Pancreas (tissue), 10 donors: ENCODE measurements at regions of chr7 and their contacts with region 1.

Region 1: GRCh38 chr7:120987683-120988590 is 574 bp upstream of the CPED1 start:
- DNase-seq: peak; percentile 70 to 89 (median 84)
- ATAC-seq: peak; percentile 92 to 96 (median 94)
- H3K4me3 ChIP-seq: peak overlapping the region; percentile 8 to 43 (median 22)
- H3K27ac ChIP-seq: peak overlapping the region in 2 of 4 donors; percentile 25 to 60
- H3K4me1 ChIP-seq: peaks cover 0 to 3% (median 0%) of the 10 kb centered on the region in 3 donors
- H3K27me3 ChIP-seq: peaks cover 0 to 21% (median 5%) of the 10 kb centered on the region in 4 donors
- CTCF ChIP-seq: peak; percentile 73 to 95 (median 93)

Region 2: GRCh38 chr7:120950539-120951308 is 37.2 kb before region 1 on chr7 and contains the start of gene ING3:
- intact Hi-C with region 1: no loop called
- DNase-seq: peak; percentile 96 to 98 (median 97)
- ATAC-seq: peak; percentile 94 to 98 (median 97)
- H3K4me3 ChIP-seq: peak within 1 kb of the TSS; percentile 33 to 62 (median 52)
- H3K27ac ChIP-seq: peak within 1 kb of the TSS; percentile 91 to 95 (median 94)
- H3K4me1 ChIP-seq: peaks cover 8 to 18% (median 18%) of the 10 kb centered on the region in 3 donors
- H3K27me3 ChIP-seq: no peaks in the 10 kb centered on the region
- CTCF ChIP-seq: no peak
- total RNA-seq, gene ING3: 6.2 to 10.1 (median 7.6) TPM

Region 3: DNA sequence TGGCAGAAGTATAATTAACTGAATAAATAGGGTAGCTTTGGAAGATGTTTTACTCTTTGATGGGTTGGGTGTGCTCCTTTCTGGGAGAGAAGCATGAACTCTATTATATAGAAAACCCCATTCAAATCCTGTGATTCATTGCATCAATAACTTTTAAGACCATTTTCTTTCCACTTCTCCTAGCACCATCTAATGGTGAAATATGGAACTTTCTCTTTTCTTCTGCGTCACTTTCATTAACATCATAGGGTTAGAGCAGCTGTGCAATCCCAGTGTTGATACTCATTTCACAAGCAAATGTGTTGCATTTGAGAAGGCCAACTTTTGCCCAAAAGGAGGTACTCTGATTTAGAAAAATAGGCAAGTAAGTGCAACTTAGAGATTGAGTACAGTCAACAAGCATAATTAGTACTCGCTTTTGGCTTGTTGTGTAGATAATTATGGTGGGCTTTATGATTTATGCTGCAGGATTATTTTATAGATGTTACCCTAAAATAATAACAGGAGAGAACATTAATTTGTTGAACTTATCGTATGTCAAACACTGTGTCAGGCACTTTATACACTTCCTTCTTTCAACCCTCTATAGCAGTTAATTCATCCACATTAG is 93.5 kb after region 1 on chr7:
- intact Hi-C with region 1: loop called in 2 of 3 experiments (anchors 2 to 10 kb)
- DNase-seq: no peak
- ATAC-seq: peak; percentile 58 to 92 (median 86)
- H3K4me3 ChIP-seq: no peak overlapping the region
- H3K27ac ChIP-seq: no peak overlapping the region
- H3K4me1 ChIP-seq: no peaks in the 10 kb centered on the region
- H3K27me3 ChIP-seq: peaks cover 0 to 8% (median 0%) of the 10 kb centered on the region in 4 donors
- CTCF ChIP-seq: peak; percentile 48 to 80 (median 70)